Posterior vena cava (tissue), 2 donors: ENCODE measurements at regions of chr10 and their contacts with region 1.

Region 1: GRCh38 chr10:126638542-126638941 is 32.0 kb downstream of the C10orf90 start:
- DNase-seq: no peak

Region 2: GRCh38 chr10:126661841-126662515 is 23.4 kb after region 1 on chr10:
- intact Hi-C with region 1: loop called in 1 of 2 experiments (anchors 1 kb)
- DNase-seq: no peak

Region 3: GRCh38 chr10:126674741-126675515 is 36.4 kb after region 1 on chr10:
- intact Hi-C with region 1: no loop called
- DNase-seq: no peak

Region 4: GRCh38 chr10:127024675-127025435 is 386.3 kb after region 1 on chr10:
- intact Hi-C with region 1: no loop called
- DNase-seq: no peak